ENCODE measurements at regions of chr1 and their contacts with region 1.

Region 1: GRCh38 chr1:117059678-117060440 is at the start of gene TTF2:
- DNase-seq: peak; percentile 99
- ATAC-seq: peak; percentile 98
- H3K4me3 ChIP-seq: peak within 1 kb of the TSS; percentile 85 to 90 (median 90)
- H3K27ac ChIP-seq: peak within 1 kb of the TSS; percentile 79
- H3K4me1 ChIP-seq: peaks cover 23% of the 10 kb centered on the region
- H3K27me3 ChIP-seq: no peaks in the 10 kb centered on the region; a peak in 1 of 5 replicates
- CTCF ChIP-seq: peak; percentile 35; the same call in 1 of the 2 replicates
- EP300 ChIP-seq: no peak
- POLR2A ChIP-seq: peak; percentile 45 to 67; a peak in 3 of 4 replicates
- RAD21 ChIP-seq: no peak
- total RNA-seq, gene TTF2: 48.9 and 58.0 TPM in 2 replicates

Region 2: GRCh38 chr1:116570358-116571200 is 489.3 kb before region 1 on chr1 and contains the start of gene CD58:
- CTCF ChIA-PET with region 1: interaction called, 7 read pairs
- POLR2A ChIA-PET with region 1: no interaction called
- in situ Hi-C with region 1: no loop called
- intact Hi-C with region 1: loop called (anchors 2 kb)
- DNase-seq: peak; percentile 65
- ATAC-seq: peak; percentile 92
- H3K4me3 ChIP-seq: peak within 1 kb of the TSS; percentile 72 to 85 (median 74)
- H3K27ac ChIP-seq: peak within 1 kb of the TSS; percentile 72
- H3K4me1 ChIP-seq: peaks cover 33% of the 10 kb centered on the region
- H3K27me3 ChIP-seq: peaks cover 0 to 20% of the 10 kb centered on the region in 2 experiments; a peak in 2 of 5 replicates
- CTCF ChIP-seq: peak; percentile 75
- EP300 ChIP-seq: no peak
- POLR2A ChIP-seq: peak; percentile 53 to 69
- RAD21 ChIP-seq: peak; percentile 25; the same call in 1 of the 2 replicates
- total RNA-seq, gene CD58: 5.3 and 9.4 TPM in 2 replicates

Region 3: GRCh38 chr1:116586741-116587143 is 473.1 kb before region 1 on chr1:
- CTCF ChIA-PET with region 1: no interaction called
- POLR2A ChIA-PET with region 1: no interaction called
- in situ Hi-C with region 1: loop called (anchors 10 kb)
- intact Hi-C with region 1: no loop called
- DNase-seq: no peak
- ATAC-seq: no peak
- H3K4me3 ChIP-seq: no peak overlapping the region
- H3K27ac ChIP-seq: no peak overlapping the region
- H3K4me1 ChIP-seq: no peaks in the 10 kb centered on the region; the same call in 1 of the 2 replicates
- H3K27me3 ChIP-seq: no peaks in the 10 kb centered on the region; a peak in 1 of 5 replicates
- CTCF ChIP-seq: no peak
- EP300 ChIP-seq: no peak
- POLR2A ChIP-seq: no peak
- RAD21 ChIP-seq: no peak

Region 4: GRCh38 chr1:116724765-116725375 is 335.0 kb before region 1 on chr1:
- CTCF ChIA-PET with region 1: interaction called, 11 read pairs
- POLR2A ChIA-PET with region 1: no interaction called
- in situ Hi-C with region 1: no loop called
- intact Hi-C with region 1: loop called (anchors 1 kb)
- DNase-seq: peak; percentile 51
- ATAC-seq: peak; percentile 58; the same call in 2 of the 3 replicates
- H3K4me3 ChIP-seq: no peak overlapping the region
- H3K27ac ChIP-seq: no peak overlapping the region
- H3K4me1 ChIP-seq: no peaks in the 10 kb centered on the region
- H3K27me3 ChIP-seq: no peaks in the 10 kb centered on the region
- CTCF ChIP-seq: peak; percentile 64
- EP300 ChIP-seq: no peak
- POLR2A ChIP-seq: no peak
- RAD21 ChIP-seq: no peak

Region 5: DNA sequence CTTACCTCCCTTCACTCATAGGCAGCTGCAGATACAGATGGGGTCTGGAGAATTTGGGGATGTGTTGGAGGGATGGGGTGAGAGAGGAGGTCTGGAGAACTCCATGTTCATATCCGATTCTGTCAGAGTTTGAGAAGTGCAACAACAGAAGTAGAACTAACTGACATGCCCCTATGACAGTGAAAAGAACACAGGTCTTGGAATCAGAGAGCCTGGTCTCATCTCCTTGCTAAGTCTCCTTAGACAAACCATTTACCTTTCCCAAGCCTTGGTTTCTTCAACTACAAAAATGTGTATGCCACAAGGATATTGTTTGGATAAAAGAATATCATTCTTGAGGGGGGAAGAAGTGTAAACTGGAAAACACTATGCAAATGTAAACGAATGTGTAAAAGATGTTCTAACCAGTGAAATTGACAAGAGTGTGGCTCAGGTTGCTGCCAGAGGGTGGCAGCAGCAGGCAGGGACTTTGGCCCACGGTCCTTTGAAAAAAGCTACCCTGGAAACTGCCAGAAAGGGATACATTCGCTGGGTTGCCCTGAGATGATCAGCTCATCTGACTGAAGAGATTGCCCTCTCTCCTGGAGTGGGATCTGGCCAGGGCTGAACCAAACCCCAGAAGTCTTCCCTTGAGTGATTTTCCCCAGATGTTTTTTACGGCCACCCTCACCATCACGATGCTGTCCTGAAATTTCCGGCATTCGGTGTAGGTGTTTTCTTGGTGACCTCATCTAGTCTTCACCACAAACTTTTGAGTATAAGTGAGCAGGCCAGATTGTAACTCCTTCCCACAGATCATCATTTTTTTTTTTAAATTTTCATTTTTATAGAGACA is 322.6 kb before region 1 on chr1:
- CTCF ChIA-PET with region 1: interaction called, 22 read pairs
- POLR2A ChIA-PET with region 1: no interaction called
- in situ Hi-C with region 1: loop called (anchors 5 kb)
- intact Hi-C with region 1: loop called (anchors 1 kb)
- DNase-seq: peak; percentile 7
- ATAC-seq: peak; percentile 69
- H3K4me3 ChIP-seq: no peak overlapping the region
- H3K27ac ChIP-seq: no peak overlapping the region
- H3K4me1 ChIP-seq: no peaks in the 10 kb centered on the region
- H3K27me3 ChIP-seq: no peaks in the 10 kb centered on the region
- CTCF ChIP-seq: peak; percentile 79
- EP300 ChIP-seq: no peak
- POLR2A ChIP-seq: no peak
- RAD21 ChIP-seq: peak; percentile 67

Region 6: GRCh38 chr1:116817582-116818064 is 242.2 kb before region 1 on chr1:
- CTCF ChIA-PET with region 1: interaction called, 3 read pairs
- POLR2A ChIA-PET with region 1: no interaction called
- in situ Hi-C with region 1: no loop called
- intact Hi-C with region 1: loop called (anchors 10 kb)
- DNase-seq: peak; percentile 76
- ATAC-seq: peak; percentile 100
- H3K4me3 ChIP-seq: no peak overlapping the region
- H3K27ac ChIP-seq: no peak overlapping the region
- H3K4me1 ChIP-seq: no peaks in the 10 kb centered on the region
- H3K27me3 ChIP-seq: no peaks in the 10 kb centered on the region
- CTCF ChIP-seq: peak; percentile 77
- EP300 ChIP-seq: no peak
- POLR2A ChIP-seq: no peak
- RAD21 ChIP-seq: peak; percentile 79

Region 7: GRCh38 chr1:116886291-116886878 is 173.5 kb before region 1 on chr1:
- CTCF ChIA-PET with region 1: no interaction called
- POLR2A ChIA-PET with region 1: no interaction called
- in situ Hi-C with region 1: no loop called
- intact Hi-C with region 1: no loop called
- DNase-seq: no peak
- ATAC-seq: no peak
- H3K4me3 ChIP-seq: no peak overlapping the region
- H3K27ac ChIP-seq: no peak overlapping the region
- H3K4me1 ChIP-seq: no peaks in the 10 kb centered on the region
- H3K27me3 ChIP-seq: peaks cover 0 to 5% of the 10 kb centered on the region in 2 experiments; a peak in 2 of 5 replicates
- CTCF ChIP-seq: no peak
- EP300 ChIP-seq: no peak
- POLR2A ChIP-seq: no peak
- RAD21 ChIP-seq: no peak

Region 8: DNA sequence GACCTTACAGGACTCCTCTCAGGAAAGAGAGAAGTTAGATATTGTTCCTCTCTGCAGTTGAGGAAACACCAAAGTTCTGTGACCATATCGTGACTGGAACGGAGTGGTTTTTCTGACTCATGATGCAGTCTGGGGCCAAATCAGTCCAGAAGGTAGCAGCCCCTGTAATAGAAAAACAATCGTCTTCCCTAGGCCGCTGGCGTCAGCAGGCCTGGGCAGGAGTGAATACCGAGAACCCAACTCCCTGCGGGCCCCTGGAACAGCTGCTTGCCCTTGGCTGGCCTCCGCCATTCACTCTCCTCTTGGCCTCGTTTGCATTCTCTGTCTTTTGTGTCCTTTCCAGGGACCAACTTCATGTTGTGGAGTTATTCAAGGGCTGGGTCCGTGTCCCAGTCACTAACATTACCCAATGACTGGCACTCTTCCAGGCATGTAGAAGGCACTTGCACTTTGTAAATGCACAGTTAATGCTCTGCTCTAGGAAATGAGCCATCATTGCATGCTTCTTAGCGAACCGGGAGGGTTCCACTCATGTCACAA is 69.2 kb before region 1 on chr1:
- CTCF ChIA-PET with region 1: no interaction called
- POLR2A ChIA-PET with region 1: no interaction called
- in situ Hi-C with region 1: no loop called
- intact Hi-C with region 1: no loop called
- DNase-seq: no peak
- ATAC-seq: no peak
- H3K4me3 ChIP-seq: no peak overlapping the region
- H3K27ac ChIP-seq: no peak overlapping the region
- H3K4me1 ChIP-seq: peaks cover 6% of the 10 kb centered on the region; the same call in 1 of the 2 replicates
- H3K27me3 ChIP-seq: no peaks in the 10 kb centered on the region
- CTCF ChIP-seq: no peak
- EP300 ChIP-seq: no peak
- POLR2A ChIP-seq: no peak
- RAD21 ChIP-seq: no peak